ENCODE measurements at regions of chr13 and their contacts with region 1.

Region 1: DNA sequence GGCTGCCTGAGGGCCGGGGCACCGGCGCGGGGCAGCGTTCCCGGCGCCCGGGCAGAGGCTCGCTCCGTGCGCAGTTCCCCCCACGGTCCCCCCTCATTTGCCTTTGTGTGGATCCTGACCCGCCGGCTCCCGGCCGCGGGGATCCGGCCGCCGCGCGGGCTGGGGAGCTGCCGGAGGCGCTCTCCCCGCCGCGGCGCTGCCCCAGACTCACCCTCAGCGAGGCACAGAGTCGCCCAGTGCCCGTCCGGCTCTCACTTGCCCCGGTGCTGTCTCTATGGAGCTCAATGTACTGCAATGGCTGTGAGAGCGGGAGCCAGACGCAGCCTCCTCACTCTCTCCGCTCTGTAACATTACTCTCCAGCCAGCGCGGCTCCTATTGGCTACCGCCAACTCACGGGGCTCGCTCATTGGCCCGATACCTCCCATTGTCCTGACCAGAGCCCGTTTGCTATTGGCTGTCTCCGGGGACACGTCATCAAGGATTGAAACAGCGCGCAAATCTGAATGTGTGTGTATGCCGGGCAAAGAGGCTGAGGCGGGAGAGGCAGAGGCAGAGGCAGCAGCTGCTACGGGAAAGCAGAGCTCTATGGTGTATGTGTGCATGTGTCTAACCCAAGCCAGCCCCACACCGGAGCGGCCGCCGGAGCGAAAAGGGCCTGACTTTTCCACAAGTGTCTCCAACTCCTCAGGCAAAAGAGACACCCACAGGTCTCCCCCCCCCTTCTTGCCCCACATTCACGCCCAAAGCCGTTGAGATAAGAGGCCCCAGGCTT is at the start of gene HMGB1:
- DNase-seq: peak; percentile 97
- ATAC-seq: peak; percentile 91
- H3K4me3 ChIP-seq: peak within 1 kb of the TSS; percentile 84
- H3K27ac ChIP-seq: peak within 1 kb of the TSS; percentile 70
- H3K4me1 ChIP-seq: peaks cover 24% of the 10 kb centered on the region
- H3K27me3 ChIP-seq: no peaks in the 10 kb centered on the region
- CTCF ChIP-seq: no peak
- total RNA-seq, gene HMGB1: 497 and 567 TPM in 2 replicates

Region 2: GRCh38 chr13:29850224-29850898 is 615.4 kb before region 1 on chr13 and contains the start of gene UBL3:
- CTCF ChIA-PET with region 1: no interaction called
- POLR2A ChIA-PET with region 1: no interaction called
- intact Hi-C with region 1: loop called (anchors 5 kb)
- DNase-seq: peak; percentile 93
- ATAC-seq: peak; percentile 72
- H3K4me3 ChIP-seq: peak within 1 kb of the TSS; percentile 94
- H3K27ac ChIP-seq: peak within 1 kb of the TSS; percentile 82
- H3K4me1 ChIP-seq: peaks cover 40% of the 10 kb centered on the region
- H3K27me3 ChIP-seq: no peaks in the 10 kb centered on the region
- CTCF ChIP-seq: no peak
- total RNA-seq, gene UBL3: 10.9 and 13.9 TPM in 2 replicates

Region 3: DNA sequence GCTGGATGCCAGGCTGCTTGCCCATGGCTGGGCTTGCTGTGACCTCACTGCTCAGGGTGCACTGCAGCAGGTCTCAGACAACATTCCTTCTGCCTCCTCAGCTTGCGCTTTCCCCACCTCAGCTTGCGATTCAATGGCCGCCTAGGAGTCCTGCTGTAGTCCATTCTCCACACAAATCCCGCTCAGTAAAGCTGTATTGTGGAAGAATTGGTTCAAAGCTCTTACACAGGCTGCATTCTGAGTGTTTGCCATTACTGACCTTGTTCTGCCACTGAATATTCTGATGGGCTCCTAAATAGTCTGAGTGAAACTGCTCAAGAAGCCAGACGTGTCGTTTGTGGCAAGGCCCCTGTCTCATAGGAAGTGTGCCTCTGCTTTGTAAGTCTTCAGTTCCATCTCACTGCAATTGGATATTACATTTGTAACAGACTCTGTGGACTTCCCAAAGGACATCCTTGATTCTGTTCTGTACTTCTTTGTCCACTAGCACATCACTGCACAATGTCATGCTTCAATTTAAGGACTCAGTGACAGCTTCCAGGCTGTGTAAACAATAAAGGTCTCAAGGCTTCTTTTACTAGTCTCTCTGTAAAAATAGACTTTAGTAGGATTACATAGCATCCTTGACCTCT is 208.2 kb before region 1 on chr13:
- CTCF ChIA-PET with region 1: no interaction called
- POLR2A ChIA-PET with region 1: no interaction called
- intact Hi-C with region 1: loop called (anchors 1 kb)
- DNase-seq: no peak
- ATAC-seq: peak; percentile 70
- H3K4me3 ChIP-seq: no peak overlapping the region
- H3K27ac ChIP-seq: no peak overlapping the region
- H3K4me1 ChIP-seq: no peaks in the 10 kb centered on the region
- H3K27me3 ChIP-seq: no peaks in the 10 kb centered on the region
- CTCF ChIP-seq: no peak

Region 4: GRCh38 chr13:30504081-30504480 is 38.3 kb after region 1 on chr13:
- CTCF ChIA-PET with region 1: no interaction called
- POLR2A ChIA-PET with region 1: no interaction called
- intact Hi-C with region 1: no loop called
- DNase-seq: no peak
- ATAC-seq: no peak
- H3K4me3 ChIP-seq: no peak overlapping the region
- H3K27ac ChIP-seq: no peak overlapping the region
- H3K4me1 ChIP-seq: no peaks in the 10 kb centered on the region
- H3K27me3 ChIP-seq: no peaks in the 10 kb centered on the region
- CTCF ChIP-seq: no peak

Region 5: DNA sequence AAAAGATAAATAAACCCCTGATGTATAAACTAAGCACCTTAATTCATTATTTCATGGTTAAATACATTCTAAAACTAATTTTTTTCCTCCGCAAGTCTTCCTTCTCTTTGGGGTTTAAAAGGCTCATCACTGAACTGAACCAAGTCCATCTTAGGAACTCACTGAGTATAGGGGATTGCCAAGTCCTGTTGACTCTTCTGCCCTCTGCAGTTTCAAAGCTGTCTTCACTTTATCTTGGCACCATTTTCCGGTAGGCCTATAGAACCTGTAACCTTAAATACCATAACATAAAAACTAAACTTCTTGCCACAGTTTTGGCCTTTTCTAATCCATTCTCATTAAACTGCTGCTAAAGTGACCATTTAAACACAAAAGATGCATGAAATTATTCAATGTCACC is 85.4 kb after region 1 on chr13:
- CTCF ChIA-PET with region 1: no interaction called
- POLR2A ChIA-PET with region 1: no interaction called
- intact Hi-C with region 1: loop called (anchors 5 kb)
- DNase-seq: peak; percentile 58
- ATAC-seq: peak; percentile 79
- H3K4me3 ChIP-seq: no peak overlapping the region
- H3K27ac ChIP-seq: no peak overlapping the region
- H3K4me1 ChIP-seq: peaks cover 9% of the 10 kb centered on the region
- H3K27me3 ChIP-seq: no peaks in the 10 kb centered on the region
- CTCF ChIP-seq: peak; percentile 56

Region 6: GRCh38 chr13:30617315-30618185 is 151.8 kb after region 1 on chr13 and contains the start of gene USPL1:
- CTCF ChIA-PET with region 1: no interaction called
- POLR2A ChIA-PET with region 1: no interaction called
- intact Hi-C with region 1: loop called (anchors 1 kb)
- DNase-seq: peak; percentile 96
- ATAC-seq: peak; percentile 84
- H3K4me3 ChIP-seq: peak within 1 kb of the TSS; percentile 87
- H3K27ac ChIP-seq: peak within 1 kb of the TSS; percentile 88
- H3K4me1 ChIP-seq: peaks cover 24% of the 10 kb centered on the region
- H3K27me3 ChIP-seq: no peaks in the 10 kb centered on the region
- CTCF ChIP-seq: no peak
- total RNA-seq, gene USPL1: 6.0 and 9.0 TPM in 2 replicates

Region 7: DNA sequence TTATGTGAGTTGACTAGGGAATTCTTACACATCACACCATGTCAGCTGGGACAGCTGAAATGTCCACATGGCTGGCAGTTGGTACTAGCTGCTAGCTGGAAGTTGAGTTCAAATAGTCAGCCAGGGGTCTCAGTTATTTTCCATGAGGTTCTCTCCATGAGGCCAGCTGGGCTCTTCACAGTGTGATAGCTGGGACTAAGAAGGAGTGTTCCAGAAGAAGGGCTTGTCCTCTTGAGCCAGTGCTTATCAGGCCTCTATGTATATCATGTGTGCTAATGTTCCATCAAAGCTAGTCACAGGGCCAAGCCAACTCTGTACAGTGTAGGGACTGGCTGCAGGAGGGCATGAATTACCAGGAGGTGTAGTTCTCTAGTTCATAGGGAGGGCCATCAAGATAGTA is 163.8 kb after region 1 on chr13:
- CTCF ChIA-PET with region 1: no interaction called
- POLR2A ChIA-PET with region 1: no interaction called
- intact Hi-C with region 1: no loop called
- DNase-seq: no peak
- ATAC-seq: no peak
- H3K4me3 ChIP-seq: no peak overlapping the region
- H3K27ac ChIP-seq: no peak overlapping the region
- H3K4me1 ChIP-seq: no peaks in the 10 kb centered on the region
- H3K27me3 ChIP-seq: no peaks in the 10 kb centered on the region
- CTCF ChIP-seq: no peak

Region 8: DNA sequence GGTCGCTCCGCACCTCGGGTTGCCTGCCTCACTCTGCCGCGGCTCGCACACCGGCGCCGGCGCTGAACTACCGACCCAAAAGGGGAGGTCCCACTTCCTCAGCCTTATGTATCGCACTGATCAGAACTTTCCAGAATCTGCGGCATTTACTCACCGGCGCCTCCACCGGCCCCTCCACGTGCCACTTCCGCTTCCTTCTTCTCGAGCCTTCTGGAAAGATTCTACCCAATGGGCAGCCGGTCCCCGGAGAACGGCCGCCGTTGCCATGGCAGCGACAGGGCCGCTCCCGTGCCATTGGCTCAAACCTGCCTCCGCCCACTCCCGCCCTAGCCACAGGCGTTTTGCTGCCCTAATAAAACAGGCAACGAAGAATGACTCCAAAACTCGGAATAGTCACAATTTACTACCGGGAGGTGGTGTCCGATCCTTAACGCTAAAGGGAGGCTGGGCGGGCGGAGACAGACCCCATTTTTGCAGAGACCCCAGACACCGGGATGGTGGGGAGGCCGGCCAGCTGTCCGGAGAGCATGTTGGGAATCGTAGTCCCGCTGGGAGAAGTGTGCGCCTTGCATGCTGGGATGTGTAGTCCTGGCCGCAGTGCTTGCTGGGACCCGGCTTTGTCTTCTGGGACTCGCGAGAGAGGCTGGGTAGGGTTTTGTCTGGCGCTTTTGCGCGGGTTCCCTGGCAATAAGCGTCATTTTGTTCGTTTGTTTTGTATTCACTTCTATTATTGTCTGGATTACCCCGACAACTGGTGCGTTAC is 696.2 kb after region 1 on chr13 and contains the start of gene HSPH1:
- CTCF ChIA-PET with region 1: no interaction called
- POLR2A ChIA-PET with region 1: no interaction called
- intact Hi-C with region 1: loop called (anchors 5 kb)
- DNase-seq: peak; percentile 95
- ATAC-seq: peak; percentile 88
- H3K4me3 ChIP-seq: peak within 1 kb of the TSS; percentile 96
- H3K27ac ChIP-seq: peak within 1 kb of the TSS; percentile 40; the same call in 1 of the 2 replicates
- H3K4me1 ChIP-seq: peaks cover 32% of the 10 kb centered on the region
- H3K27me3 ChIP-seq: no peaks in the 10 kb centered on the region
- CTCF ChIP-seq: 0 out of 2 replicates have a peak, but pooled peaks have one; percentile 12
- total RNA-seq, gene HSPH1: 83.7 and 102 TPM in 2 replicates

Measured in PC-3 (cell line).